ENCODE measurements at regions of chr2 and their contacts with region 1.

Region 1: DNA sequence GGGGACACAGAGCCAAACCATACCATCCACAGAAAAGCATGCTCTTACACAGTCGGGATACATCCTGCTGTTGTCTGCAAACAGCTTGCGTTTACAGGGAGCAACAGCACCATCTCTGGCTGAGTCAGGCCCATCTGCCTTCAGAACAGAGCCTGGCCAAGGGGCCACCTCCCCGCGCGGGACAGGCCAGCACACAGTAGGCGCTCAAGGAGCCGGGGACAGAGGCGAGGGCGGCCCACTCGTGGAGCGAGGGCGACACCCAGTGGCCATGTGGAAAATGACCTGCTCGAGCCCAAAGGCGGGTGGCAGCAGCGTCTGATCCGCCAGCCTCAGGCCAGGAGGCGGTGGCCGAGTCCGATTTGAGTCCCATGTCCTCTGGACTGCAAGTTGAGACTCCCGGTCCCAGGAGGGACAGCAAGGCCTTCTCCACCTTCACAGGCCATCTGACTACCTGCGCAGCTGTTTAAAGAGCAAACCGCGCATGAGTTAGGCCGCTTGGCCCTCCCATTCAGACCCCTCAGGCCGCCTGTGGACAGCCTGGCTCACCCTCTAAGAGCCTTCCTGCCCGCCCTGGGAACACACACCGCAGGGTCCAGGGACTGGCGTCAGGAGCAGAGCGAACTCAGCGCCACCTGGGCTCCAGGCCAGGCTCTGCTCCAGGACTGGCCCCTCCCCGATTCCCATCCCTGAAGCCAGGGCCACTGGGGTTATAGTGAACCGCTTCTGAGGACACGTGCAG is 38.3 kb downstream of the TTC32 start:
- DNase-seq: peak; percentile 80 to 87 (median 82)
- ATAC-seq: peak; percentile 92 to 96 (median 94)
- H3K4me3 ChIP-seq: peak overlapping the region; percentile 18 to 39 (median 25)
- H3K27ac ChIP-seq: peak overlapping the region in 2 of 3 donors; percentile 39 to 63
- H3K4me1 ChIP-seq: peaks cover 0 to 6% (median 0%) of the 10 kb centered on the region in 4 donors
- H3K27me3 ChIP-seq: no peaks in the 10 kb centered on the region
- CTCF ChIP-seq: peak; percentile 98
- POLR2A ChIP-seq: no peak

Region 2: DNA sequence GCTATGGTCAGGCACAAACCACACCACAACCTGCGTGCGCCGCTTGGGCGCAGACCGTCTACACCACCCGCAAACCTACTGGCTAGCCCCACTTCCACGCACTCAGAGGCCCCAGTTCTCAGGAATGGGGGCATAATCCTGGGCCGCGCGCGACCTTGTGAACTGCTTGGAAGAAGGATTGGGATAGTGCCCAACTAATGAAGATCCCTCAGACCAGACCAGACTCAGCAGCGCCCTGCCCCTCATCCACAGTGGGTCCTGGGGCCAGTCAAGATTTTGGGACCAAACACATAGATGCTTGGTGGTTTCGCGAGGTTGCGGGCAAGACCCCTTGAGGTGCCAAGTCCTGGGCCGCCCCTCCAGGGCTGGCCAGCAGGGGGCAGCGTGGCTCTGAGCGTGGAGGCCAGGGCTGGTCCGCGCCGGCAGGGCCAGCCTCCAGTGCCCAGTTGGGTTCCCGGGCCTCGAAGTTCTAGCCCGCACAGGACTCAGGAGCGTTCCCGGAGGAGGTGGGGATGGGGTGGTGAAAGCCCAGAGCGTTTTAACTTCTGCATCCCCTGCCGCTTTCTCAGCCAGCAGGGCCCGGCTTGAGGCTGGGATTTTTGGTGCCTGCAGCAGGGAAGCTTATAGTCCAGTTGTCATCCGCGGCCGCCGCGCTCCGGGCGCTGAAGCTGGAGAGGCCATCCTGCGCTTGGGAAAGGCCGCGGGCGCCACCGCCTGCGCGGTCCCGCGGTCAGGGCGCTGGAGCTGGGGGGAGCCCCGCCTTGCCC is 513.4 kb before region 1 on chr2:
- intact Hi-C with region 1: loop called in 1 of 2 experiments (anchors 10 kb)
- DNase-seq: peak; percentile 76 to 79 (median 77)
- ATAC-seq: peak; percentile 65 to 68 (median 66)
- H3K4me3 ChIP-seq: peak overlapping the region; percentile 20 to 26 (median 26)
- H3K27ac ChIP-seq: no peak overlapping the region
- H3K4me1 ChIP-seq: peaks cover 0 to 20% (median 7%) of the 10 kb centered on the region in 4 donors
- H3K27me3 ChIP-seq: peaks cover 7 to 33% of the 10 kb centered on the region in 2 donors
- CTCF ChIP-seq: peak; percentile 74 to 91 (median 83)
- POLR2A ChIP-seq: no peak

Region 3: GRCh38 chr2:19764998-19765397 is 98.5 kb before region 1 on chr2:
- intact Hi-C with region 1: no loop called
- DNase-seq: no peak
- ATAC-seq: no peak
- H3K4me3 ChIP-seq: no peak overlapping the region
- H3K27ac ChIP-seq: no peak overlapping the region
- H3K4me1 ChIP-seq: no peaks in the 10 kb centered on the region
- H3K27me3 ChIP-seq: no peaks in the 10 kb centered on the region
- CTCF ChIP-seq: no peak
- POLR2A ChIP-seq: no peak

Region 4: GRCh38 chr2:20225294-20226151 is 362.1 kb after region 1 on chr2:
- intact Hi-C with region 1: no loop called
- DNase-seq: peak; percentile 82 to 93 (median 92)
- ATAC-seq: peak; percentile 68 to 86 (median 77)
- H3K4me3 ChIP-seq: peak overlapping the region; percentile 85 to 93 (median 85)
- H3K27ac ChIP-seq: peak overlapping the region; percentile 90 to 99 (median 92)
- H3K4me1 ChIP-seq: peaks cover 0 to 32% (median 14%) of the 10 kb centered on the region in 4 donors
- H3K27me3 ChIP-seq: no peaks in the 10 kb centered on the region
- CTCF ChIP-seq: peak; percentile 52 to 63 (median 60)
- POLR2A ChIP-seq: no peak

Measured in right lobe of liver (tissue), 6 donors.